Activated B cell treated with CpG ODN at 0.5 μM for 24 hours (primary cell): ENCODE measurements at regions of chr15 and their contacts with region 1.

Region 1: GRCh38 chr15:75738647-75739331 is 26.1 kb upstream of the CSPG4 start:
- DNase-seq: peak; percentile 95
- ATAC-seq: peak; percentile 98
- H3K4me3 Mint-ChIP-seq: peak overlapping the region; percentile 82
- H3K27ac Mint-ChIP-seq: peak overlapping the region; percentile 65
- H3K4me1 Mint-ChIP-seq: peaks cover 15% of the 10 kb centered on the region
- H3K27me3 Mint-ChIP-seq: peaks cover 7% of the 10 kb centered on the region
- CTCF ChIP-seq: no peak

Region 2: GRCh38 chr15:75758071-75758872 is 19.5 kb after region 1 on chr15:
- CTCF ChIA-PET with region 1: interaction called, 3 read pairs
- POLR2A ChIA-PET with region 1: interaction called, 7 read pairs
- intact Hi-C with region 1: loop called (anchors 1 kb)
- DNase-seq: peak; percentile 57
- ATAC-seq: peak; percentile 92
- H3K4me3 Mint-ChIP-seq: peak overlapping the region; percentile 94
- H3K27ac Mint-ChIP-seq: peak overlapping the region; percentile 89
- H3K4me1 Mint-ChIP-seq: peaks cover 18% of the 10 kb centered on the region
- H3K27me3 Mint-ChIP-seq: no peaks in the 10 kb centered on the region
- CTCF ChIP-seq: no peak